ENCODE measurements at regions of chr7 and their contacts with region 1.

Region 1: GRCh38 chr7:9083829-9084228 is 650.4 kb downstream of the NXPH1 start:
- DNase-seq: no peak

Region 2: GRCh38 chr7:8005276-8006094 is 1078.3 kb before region 1 on chr7:
- in situ Hi-C with region 1: no loop called
- DNase-seq: no peak

Region 3: GRCh38 chr7:9013940-9014339 is 69.9 kb before region 1 on chr7:
- in situ Hi-C with region 1: no loop called
- DNase-seq: no peak

Region 4: DNA sequence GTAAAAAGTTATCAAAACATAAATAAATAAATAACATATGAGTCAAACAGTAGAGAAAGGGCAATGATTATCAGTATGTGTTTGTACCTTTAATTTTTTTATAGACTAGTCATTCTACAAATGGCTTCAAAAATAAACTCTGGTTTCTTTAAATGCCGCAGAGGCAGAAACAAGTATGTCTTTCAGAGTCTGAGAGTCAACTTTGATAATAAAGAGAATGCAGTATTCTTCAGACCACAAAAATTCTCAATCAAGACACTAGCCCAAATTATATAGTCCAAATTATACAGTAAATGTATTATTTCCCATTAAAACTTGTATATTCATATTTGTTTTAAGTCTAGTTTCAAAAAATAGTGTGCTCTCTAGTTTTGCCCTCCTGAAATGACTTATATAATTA is 491.9 kb after region 1 on chr7:
- in situ Hi-C with region 1: loop called (anchors 10 kb)
- DNase-seq: no peak